Activated CD4-positive, alpha-beta memory T cell treated with anti-CD3 and anti-CD28 coated beads for 36 hours (primary cell): ENCODE measurements at regions of chr12 and their contacts with region 1.

Region 1: GRCh38 chr12:12356886-12357718 is at the start of gene BORCS5:
- DNase-seq: peak; percentile 99
- H3K4me3 Mint-ChIP-seq: peak within 1 kb of the TSS; percentile 98
- H3K27ac Mint-ChIP-seq: peak within 1 kb of the TSS; percentile 99
- H3K4me1 Mint-ChIP-seq: peaks cover 43% of the 10 kb centered on the region
- H3K27me3 Mint-ChIP-seq: no peaks in the 10 kb centered on the region
- total RNA-seq, gene BORCS5: 43.7 to 47.8 TPM

Region 2: GRCh38 chr12:12486661-12487240 is 129.6 kb after region 1 on chr12:
- CTCF ChIA-PET with region 1: no interaction called
- POLR2A ChIA-PET with region 1: interaction called, 13 read pairs
- intact Hi-C with region 1: no loop called
- DNase-seq: peak; percentile 59
- H3K4me3 Mint-ChIP-seq: peak overlapping the region; percentile 6
- H3K27ac Mint-ChIP-seq: peak overlapping the region; percentile 99
- H3K4me1 Mint-ChIP-seq: peaks cover 56% of the 10 kb centered on the region
- H3K27me3 Mint-ChIP-seq: no peaks in the 10 kb centered on the region

Region 3: DNA sequence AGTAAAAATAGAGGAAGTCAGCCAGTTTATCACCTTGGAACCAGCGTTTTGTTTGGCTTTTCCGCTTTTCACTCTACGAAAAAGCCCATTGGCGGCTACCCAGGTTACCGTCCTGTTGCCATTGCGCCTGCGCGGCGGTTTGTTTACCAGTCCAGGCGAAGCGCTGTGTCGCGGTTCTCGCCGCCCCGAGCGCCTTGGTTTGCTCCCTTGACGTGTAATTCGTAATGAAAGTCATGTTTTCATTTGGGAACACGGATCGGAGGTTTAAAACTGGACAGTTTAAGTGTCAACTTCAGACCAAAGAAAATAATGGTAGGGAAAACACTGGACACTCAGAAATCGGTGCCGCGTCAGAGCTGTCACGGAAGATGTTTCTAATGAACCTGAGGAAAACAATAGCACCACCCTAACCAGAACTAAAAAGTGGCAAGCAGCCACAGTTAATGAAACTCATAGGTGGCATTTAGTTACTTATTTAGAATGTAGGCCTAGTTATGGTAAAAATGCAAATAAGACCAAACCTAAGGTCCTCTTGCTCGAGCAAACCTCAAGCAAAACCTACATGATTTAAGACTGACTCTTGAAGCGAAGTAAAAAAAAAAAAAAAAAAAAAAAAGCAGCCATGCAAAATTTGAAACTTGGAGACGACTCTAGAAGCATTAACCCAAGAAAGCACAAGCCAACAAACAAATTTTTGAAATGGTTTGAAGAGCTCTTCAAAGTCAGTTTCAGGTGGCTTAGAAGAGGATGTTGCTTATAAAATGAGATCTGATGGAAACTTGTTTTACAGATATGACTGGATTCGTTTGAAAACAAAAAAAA is 339.7 kb after region 1 on chr12:
- CTCF ChIA-PET with region 1: interaction called, 5 read pairs
- POLR2A ChIA-PET with region 1: interaction called, 16 read pairs
- intact Hi-C with region 1: no loop called
- DNase-seq: peak; percentile 92
- H3K4me3 Mint-ChIP-seq: peak overlapping the region; percentile 92
- H3K27ac Mint-ChIP-seq: peak overlapping the region; percentile 98
- H3K4me1 Mint-ChIP-seq: peaks cover 65% of the 10 kb centered on the region
- H3K27me3 Mint-ChIP-seq: no peaks in the 10 kb centered on the region

Region 4: DNA sequence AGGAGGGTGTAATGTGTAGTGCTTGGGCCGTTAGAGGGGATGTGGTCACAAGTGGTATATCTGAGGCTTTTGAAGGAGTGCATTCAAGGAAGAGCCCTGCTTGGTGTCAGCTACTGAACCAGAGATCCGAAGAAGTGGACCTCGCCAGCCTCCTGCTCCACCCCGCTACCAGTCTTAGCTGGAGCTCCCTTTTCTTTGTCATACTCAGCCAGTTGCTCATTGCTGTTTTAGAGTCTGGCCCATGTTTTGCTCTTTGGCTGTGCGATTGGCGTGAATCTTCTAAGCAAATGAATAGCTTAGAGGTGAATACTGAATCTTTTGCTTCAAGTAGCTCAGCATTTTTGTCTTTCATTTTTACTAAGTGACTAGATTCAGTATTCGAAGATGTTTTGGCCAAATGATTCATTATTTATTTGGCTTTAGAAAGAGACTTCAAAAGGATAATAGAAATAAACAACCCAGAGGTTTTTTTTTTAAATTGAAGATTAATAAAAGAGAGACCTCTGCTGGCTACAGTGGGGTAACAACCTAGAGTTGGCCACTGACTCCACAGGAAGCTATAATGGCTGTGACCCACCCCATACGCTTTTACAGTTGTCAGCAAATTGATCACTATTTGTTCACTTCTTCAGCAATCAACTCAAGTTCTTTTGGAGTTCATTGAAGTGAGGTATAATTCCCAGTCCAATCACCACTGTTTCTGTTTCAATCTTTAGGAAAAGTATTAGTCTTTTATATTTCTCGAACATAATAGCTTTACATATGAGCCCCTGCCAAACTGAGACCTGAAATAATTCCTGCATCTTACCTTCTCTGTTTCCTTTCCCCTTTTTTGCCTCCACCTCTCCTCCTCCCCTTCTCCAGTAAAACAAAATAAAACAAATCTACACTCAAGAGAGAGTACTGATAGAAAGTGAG is 379.9 kb after region 1 on chr12:
- CTCF ChIA-PET with region 1: interaction called, 14 read pairs
- POLR2A ChIA-PET with region 1: interaction called, 7 read pairs
- intact Hi-C with region 1: no loop called
- DNase-seq: peak; percentile 76
- H3K4me3 Mint-ChIP-seq: peak overlapping the region; percentile 59
- H3K27ac Mint-ChIP-seq: peak overlapping the region; percentile 88
- H3K4me1 Mint-ChIP-seq: peaks cover 46% of the 10 kb centered on the region
- H3K27me3 Mint-ChIP-seq: no peaks in the 10 kb centered on the region

Region 5: GRCh38 chr12:13350946-13351345 is 993.8 kb after region 1 on chr12:
- CTCF ChIA-PET with region 1: no interaction called
- POLR2A ChIA-PET with region 1: no interaction called
- intact Hi-C with region 1: no loop called
- DNase-seq: no peak
- H3K4me3 Mint-ChIP-seq: no peak overlapping the region
- H3K27ac Mint-ChIP-seq: no peak overlapping the region
- H3K4me1 Mint-ChIP-seq: peaks cover 5% of the 10 kb centered on the region
- H3K27me3 Mint-ChIP-seq: peaks cover 20% of the 10 kb centered on the region